CD4-positive, alpha-beta T cell (primary cell): ENCODE measurements at regions of chr1 and their contacts with region 1.

Region 1: DNA sequence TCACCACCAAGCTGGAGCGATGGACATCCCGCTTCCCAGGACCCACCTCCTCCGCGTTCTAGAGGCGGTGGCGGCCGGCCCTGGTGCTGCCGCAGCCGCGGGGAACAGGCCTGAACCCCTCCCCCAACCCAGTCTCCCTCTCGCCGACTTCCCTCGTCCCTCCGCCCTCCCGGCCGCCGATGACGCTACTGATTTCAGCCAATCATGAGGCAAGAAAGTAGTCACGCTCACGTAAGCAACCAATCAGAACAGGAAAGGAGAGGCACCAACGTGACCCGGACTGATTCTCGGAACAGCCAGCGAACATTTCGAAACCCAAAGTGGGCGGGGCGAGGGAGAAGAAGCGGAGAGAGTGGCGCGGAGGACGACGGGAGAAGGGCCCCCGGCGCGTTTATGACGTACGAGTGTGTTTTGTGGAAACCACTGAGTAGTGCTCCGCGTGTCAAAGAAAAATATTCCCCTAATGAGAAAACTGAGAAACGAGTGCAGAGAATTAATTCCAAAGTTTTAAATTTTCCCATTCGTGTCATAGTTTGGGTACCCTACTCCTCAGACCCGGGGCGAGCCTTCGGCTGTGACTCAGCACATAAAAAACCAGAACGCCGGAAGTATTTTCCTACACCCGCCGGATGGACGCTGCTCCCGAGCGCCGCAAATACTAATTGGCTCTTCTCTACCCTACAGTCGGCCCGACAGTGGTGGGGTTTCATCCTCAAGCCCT is at the start of gene NRDC:
- DNase-seq: peak; percentile 97 to 100 (median 99)
- ATAC-seq: peak; percentile 88
- H3K4me3 ChIP-seq: peak within 1 kb of the TSS; percentile 68
- H3K4me3 Mint-ChIP-seq: no peak within 1 kb of the TSS
- H3K27ac ChIP-seq: peak within 1 kb of the TSS; percentile 89 to 95
- H3K27ac Mint-ChIP-seq: no peak within 1 kb of the TSS
- H3K4me1 ChIP-seq: peaks cover 33% of the 10 kb centered on the region
- H3K4me1 Mint-ChIP-seq: peaks cover 27% of the 10 kb centered on the region
- H3K27me3 ChIP-seq: peaks cover 2 to 3% of the 10 kb centered on the region in 2 experiments
- H3K27me3 Mint-ChIP-seq: peaks cover 13% of the 10 kb centered on the region
- CTCF ChIP-seq: no peak
- total RNA-seq, gene NRDC: 59.0 to 62.4 TPM

Region 2: DNA sequence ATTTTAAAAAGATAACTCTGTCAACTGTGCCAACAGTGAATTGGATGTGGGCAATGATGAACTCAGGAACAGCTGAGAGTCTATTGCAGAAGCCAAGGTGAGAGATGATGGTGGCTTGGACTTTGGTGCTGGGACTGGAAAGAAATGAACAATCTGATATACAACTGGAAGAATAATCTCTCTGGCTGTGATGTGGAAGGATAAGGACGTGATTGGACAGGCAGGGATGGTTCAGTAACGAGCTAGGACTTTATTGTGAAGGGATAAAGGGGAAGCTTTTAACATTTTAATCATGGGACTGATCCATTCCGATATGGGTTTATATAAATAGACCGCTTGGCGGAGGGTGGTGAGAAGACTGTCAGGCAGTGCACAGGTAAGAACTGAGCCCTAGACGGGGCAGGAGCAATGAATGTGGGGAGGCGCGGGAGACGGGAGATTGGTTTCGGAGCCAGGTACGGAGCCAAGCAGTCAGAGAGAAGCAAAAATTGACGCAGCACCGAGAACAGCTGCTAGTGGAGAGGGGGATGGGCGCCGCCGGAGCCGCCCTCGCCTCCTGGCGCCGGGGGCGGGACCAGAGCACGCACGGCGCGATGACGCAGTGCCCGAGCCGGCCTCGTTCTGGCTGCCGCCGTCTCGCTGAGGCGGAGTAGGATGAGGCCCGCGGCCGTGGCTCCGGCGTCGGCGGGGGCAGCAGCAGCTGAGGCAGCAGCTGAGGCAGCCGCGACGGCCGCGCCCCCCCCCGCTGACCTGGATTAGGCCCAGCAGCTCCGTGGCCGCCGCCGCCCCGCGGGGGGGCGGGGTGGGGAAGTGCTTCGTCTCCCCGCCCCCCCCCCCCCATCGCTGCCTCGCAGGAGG is 642.9 kb before region 1 on chr1 and contains the start of gene RNF11:
- CTCF ChIA-PET with region 1: no interaction called
- POLR2A ChIA-PET with region 1: interaction called, 4 read pairs
- intact Hi-C with region 1: loop called in 1 of 2 experiments (anchors 5 kb)
- DNase-seq: peak; percentile 82 to 97 (median 92)
- ATAC-seq: peak; percentile 90
- H3K4me3 ChIP-seq: peak within 1 kb of the TSS; percentile 78
- H3K4me3 Mint-ChIP-seq: peak within 1 kb of the TSS; percentile 94
- H3K27ac ChIP-seq: peak within 1 kb of the TSS; percentile 82 to 83
- H3K27ac Mint-ChIP-seq: peak within 1 kb of the TSS; percentile 93
- H3K4me1 ChIP-seq: peaks cover 33% of the 10 kb centered on the region
- H3K4me1 Mint-ChIP-seq: peaks cover 37% of the 10 kb centered on the region
- H3K27me3 ChIP-seq: no peaks in the 10 kb centered on the region
- H3K27me3 Mint-ChIP-seq: no peaks in the 10 kb centered on the region
- CTCF ChIP-seq: no peak
- total RNA-seq, gene RNF11: 91.3 to 97.4 TPM

Region 3: DNA sequence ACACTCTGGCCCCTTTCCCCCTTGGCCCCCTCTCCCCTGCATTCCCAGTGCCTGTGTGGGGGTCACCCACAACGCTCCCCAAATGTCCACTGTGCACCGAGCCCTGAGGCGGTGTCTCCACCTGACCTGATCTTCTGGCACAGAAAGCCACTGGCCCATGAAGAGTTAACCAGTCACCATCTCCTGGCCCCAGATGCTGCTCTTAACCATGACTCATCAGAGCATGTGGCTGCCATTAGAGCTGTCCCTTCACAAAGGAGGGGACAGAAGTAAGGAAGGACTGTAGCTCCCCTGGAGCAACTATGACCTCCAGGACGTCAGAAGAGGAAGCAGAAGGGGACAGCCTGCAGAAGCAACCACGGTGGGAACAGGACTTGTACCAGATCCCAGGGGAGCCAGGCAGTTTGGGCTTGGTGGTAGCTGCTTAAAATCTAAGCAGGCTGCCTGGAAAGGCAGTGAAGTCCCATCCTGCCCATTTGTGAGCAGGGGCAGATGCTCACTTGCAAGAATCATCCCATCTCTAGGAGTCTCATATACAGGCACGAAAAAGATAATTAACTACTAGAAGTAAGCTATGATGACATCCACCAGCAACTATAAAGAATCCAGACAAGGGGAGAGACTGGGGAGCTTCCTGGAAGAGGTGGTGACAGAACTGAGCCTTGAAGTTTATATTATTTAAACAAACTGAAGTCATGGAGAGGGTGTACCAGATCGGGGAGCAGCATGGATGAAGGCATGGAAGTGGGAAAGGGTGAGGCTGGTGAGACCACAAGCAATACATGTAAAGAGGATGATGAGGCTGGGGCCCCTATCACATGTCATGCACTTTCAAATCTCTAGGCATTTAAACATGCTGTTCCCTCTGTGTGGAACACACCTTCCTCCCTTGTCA is 547.3 kb before region 1 on chr1:
- CTCF ChIA-PET with region 1: no interaction called
- POLR2A ChIA-PET with region 1: no interaction called
- intact Hi-C with region 1: no loop called
- DNase-seq: peak in 1 of 14 experiments; percentile 15
- ATAC-seq: no peak
- H3K4me3 ChIP-seq: no peak overlapping the region
- H3K4me3 Mint-ChIP-seq: peak overlapping the region; percentile 75
- H3K27ac ChIP-seq: no peak overlapping the region
- H3K27ac Mint-ChIP-seq: no peak overlapping the region
- H3K4me1 ChIP-seq: peaks cover 5% of the 10 kb centered on the region
- H3K4me1 Mint-ChIP-seq: peaks cover 7% of the 10 kb centered on the region
- H3K27me3 ChIP-seq: peaks cover 15 to 35% of the 10 kb centered on the region in 2 experiments
- H3K27me3 Mint-ChIP-seq: peaks cover 48% of the 10 kb centered on the region
- CTCF ChIP-seq: no peak

Region 4: DNA sequence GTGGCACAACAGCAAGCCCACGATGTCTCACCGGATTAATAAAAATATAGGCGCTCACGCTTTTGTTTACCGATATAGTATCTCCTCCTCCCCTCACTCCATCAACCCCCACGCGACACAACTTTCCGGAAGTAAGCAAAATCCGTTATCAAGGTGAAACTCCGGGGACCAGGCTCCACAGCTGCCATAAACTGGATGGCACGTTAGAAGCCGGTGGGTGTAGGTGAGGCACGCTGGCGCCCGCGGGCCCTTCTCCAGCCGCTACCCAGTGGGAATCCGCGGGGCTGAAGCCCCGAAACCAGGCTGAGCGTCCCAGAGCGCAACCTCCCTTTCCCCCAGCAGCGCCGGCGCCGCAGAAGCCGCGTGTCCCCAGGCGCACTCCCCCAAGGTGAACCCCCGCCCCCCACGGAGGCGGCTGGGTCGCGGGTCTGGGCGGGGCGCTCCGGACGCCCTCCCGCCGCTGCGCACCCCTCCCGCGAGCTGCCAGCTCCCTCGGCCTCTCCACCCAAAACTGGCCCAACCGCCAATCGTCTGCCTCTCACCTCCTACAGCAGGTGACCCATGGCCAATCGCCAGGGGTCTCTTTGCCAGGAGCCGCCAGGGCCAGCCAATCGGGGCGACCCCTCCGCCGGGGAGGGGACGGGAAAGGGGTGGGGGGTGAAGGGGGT is 149.5 kb before region 1 on chr1:
- CTCF ChIA-PET with region 1: no interaction called
- POLR2A ChIA-PET with region 1: interaction called, 4 read pairs
- intact Hi-C with region 1: loop called in 1 of 2 experiments (anchors 5 kb)
- DNase-seq: peak; percentile 84 to 97 (median 90)
- ATAC-seq: peak; percentile 90
- H3K4me3 ChIP-seq: peak overlapping the region; percentile 92
- H3K4me3 Mint-ChIP-seq: peak overlapping the region; percentile 95
- H3K27ac ChIP-seq: peak overlapping the region; percentile 71
- H3K27ac Mint-ChIP-seq: peak overlapping the region; percentile 87
- H3K4me1 ChIP-seq: peaks cover 22% of the 10 kb centered on the region
- H3K4me1 Mint-ChIP-seq: peaks cover 58% of the 10 kb centered on the region
- H3K27me3 ChIP-seq: no peaks in the 10 kb centered on the region
- H3K27me3 Mint-ChIP-seq: no peaks in the 10 kb centered on the region
- CTCF ChIP-seq: no peak

Region 5: DNA sequence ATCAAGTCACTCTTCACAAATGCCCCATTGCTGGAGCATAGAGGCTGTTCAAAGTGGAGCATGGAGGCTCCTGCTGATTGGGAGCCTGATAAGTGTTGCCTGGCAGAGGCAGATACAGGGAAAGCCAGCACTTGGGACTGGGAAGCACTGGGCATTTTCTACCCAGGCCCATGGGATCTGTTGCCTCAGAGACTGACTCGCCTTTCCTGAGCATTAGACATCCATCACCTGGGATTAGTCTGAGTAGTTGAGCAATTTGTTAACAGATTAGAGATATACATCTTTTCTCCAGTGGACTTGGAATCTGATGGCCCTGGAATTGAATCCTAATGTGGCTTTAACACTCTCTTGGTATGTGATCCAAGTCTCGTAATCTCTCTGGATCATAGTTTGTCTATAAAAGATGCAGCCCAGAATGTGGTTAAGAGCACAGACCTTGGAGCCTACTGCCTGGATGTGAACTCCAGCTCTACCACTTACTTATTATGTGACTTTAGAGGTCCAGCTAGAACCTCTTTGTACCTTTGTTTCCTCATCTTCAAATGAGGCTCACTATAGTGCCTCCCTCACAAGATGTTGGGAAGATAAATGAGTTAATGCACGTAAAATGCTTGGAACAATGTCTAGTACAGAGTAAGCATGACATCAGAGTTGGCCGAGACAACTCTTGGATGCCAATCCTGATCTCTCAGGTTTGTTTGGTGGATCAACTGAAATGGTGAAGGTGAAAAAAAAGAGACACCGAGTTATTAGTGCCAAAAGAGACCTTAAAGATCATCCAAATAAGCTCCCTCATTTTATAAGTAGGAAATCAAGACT is 38.0 kb after region 1 on chr1:
- CTCF ChIA-PET with region 1: no interaction called
- POLR2A ChIA-PET with region 1: no interaction called
- intact Hi-C with region 1: no loop called
- DNase-seq: no peak
- ATAC-seq: no peak
- H3K4me3 ChIP-seq: no peak overlapping the region
- H3K4me3 Mint-ChIP-seq: no peak overlapping the region
- H3K27ac ChIP-seq: no peak overlapping the region
- H3K27ac Mint-ChIP-seq: no peak overlapping the region
- H3K4me1 ChIP-seq: no peaks in the 10 kb centered on the region
- H3K4me1 Mint-ChIP-seq: no peaks in the 10 kb centered on the region
- H3K27me3 ChIP-seq: peaks cover 0 to 8% of the 10 kb centered on the region in 2 experiments
- H3K27me3 Mint-ChIP-seq: peaks cover 55% of the 10 kb centered on the region
- CTCF ChIP-seq: no peak

Region 6: DNA sequence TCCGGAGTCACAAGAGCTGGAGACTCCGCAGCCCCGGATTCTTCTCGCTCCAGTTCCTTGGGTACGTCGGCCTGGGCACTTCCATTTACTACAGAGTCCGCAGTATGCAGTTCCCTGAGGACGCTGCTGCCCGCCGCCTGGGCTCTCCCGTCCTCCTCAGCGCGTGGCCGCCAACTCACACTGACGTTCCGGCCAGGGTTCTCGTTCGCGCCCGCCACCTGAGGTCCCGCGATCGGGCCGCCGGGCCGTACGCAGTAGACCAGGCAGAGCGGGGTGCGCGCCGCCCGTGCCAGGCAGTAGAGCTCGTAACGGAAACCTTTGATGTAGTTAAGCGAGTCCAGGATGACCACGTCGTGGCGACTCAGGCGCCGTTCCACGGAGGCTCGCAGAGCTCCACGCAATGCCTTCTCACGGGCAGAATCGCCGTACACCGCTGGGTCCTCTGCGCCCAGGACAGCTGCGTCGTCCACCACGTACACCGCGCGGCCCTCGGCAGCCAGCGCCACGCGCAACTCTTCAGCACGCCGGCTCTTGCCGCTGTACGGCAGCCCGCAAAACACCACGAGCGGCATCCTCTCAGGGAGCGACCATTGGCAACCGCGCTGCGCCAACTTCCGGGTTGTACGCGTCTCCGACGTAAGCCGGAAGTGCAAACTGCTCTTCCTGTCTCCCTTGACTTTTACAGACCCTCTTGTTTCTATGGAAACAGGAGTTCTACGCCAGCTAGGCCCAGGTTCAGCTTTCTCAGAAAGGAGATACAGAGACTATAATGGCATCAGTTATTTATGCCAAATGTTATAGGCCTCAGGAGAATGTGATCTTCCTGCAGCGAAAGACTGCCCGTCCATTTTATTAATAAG is 154.6 kb after region 1 on chr1 and contains the start of gene KTI12:
- CTCF ChIA-PET with region 1: no interaction called
- POLR2A ChIA-PET with region 1: interaction called, 11 read pairs
- intact Hi-C with region 1: no loop called
- DNase-seq: peak; percentile 78 to 96 (median 86)
- ATAC-seq: peak; percentile 94
- H3K4me3 ChIP-seq: peak within 1 kb of the TSS; percentile 85
- H3K4me3 Mint-ChIP-seq: peak within 1 kb of the TSS; percentile 91
- H3K27ac ChIP-seq: peak within 1 kb of the TSS; percentile 81 to 91
- H3K27ac Mint-ChIP-seq: peak within 1 kb of the TSS; percentile 97
- H3K4me1 ChIP-seq: peaks cover 23% of the 10 kb centered on the region
- H3K4me1 Mint-ChIP-seq: peaks cover 40% of the 10 kb centered on the region
- H3K27me3 ChIP-seq: no peaks in the 10 kb centered on the region
- H3K27me3 Mint-ChIP-seq: no peaks in the 10 kb centered on the region
- CTCF ChIP-seq: no peak
- total RNA-seq, gene KTI12: 23.4 to 24.0 TPM

Region 7: DNA sequence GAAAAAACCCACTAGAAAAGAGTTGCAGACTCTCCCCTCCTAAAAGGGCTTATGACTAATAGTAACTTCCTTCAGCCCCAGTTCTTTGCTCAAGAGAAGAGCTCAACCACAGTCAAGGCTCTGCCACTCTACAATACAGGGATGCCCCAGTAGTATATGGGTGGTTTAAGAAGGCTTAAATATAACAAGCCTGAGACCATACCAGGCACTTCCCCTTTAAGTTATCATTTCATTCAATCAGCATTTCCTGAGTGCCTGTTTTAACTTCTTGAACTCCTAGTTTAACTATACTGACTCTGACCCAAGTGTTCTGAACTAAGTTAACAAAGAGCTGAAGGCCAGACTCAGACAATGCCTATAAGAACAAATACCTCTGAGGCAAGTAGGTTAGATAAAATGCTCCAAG is 545.5 kb after region 1 on chr1:
- CTCF ChIA-PET with region 1: no interaction called
- POLR2A ChIA-PET with region 1: no interaction called
- intact Hi-C with region 1: loop called in 1 of 2 experiments (anchors 2 kb)
- DNase-seq: peak in 12 of 14 experiments; percentile 11 to 82 (median 26)
- ATAC-seq: peak; percentile 88
- H3K4me3 ChIP-seq: peak overlapping the region; percentile 28
- H3K4me3 Mint-ChIP-seq: peak overlapping the region; percentile 53
- H3K27ac ChIP-seq: peak overlapping the region; percentile 78 to 81
- H3K27ac Mint-ChIP-seq: peak overlapping the region; percentile 100
- H3K4me1 ChIP-seq: peaks cover 21% of the 10 kb centered on the region
- H3K4me1 Mint-ChIP-seq: peaks cover 58% of the 10 kb centered on the region
- H3K27me3 ChIP-seq: no peaks in the 10 kb centered on the region
- H3K27me3 Mint-ChIP-seq: no peaks in the 10 kb centered on the region
- CTCF ChIP-seq: no peak